Ascending aorta (tissue), 2 donors: ENCODE measurements at regions of chr15 and their contacts with region 1.

Region 1: GRCh38 chr15:90886041-90886614 is 1.8 kb downstream of the FES start:
- DNase-seq: peak in 1 of 2 donors; percentile 85
- H3K4me3 ChIP-seq: peak overlapping the region; percentile 8 to 75
- H3K27ac ChIP-seq: peak overlapping the region; percentile 90 to 94
- H3K4me1 ChIP-seq: peaks cover 10 to 30% of the 10 kb centered on the region in 2 donors
- H3K27me3 ChIP-seq: no peaks in the 10 kb centered on the region
- CTCF ChIP-seq: peak; percentile 96 to 99 (median 98)

Region 2: GRCh38 chr15:89893696-89894455 is 992.3 kb before region 1 on chr15 and contains the start of gene AP3S2:
- intact Hi-C with region 1: loop called (anchors 10 kb)
- DNase-seq: peak; percentile 64 to 95
- H3K4me3 ChIP-seq: peak within 1 kb of the TSS; percentile 76 to 87
- H3K27ac ChIP-seq: peak within 1 kb of the TSS; percentile 85 to 90
- H3K4me1 ChIP-seq: peaks cover 0 to 6% of the 10 kb centered on the region in 2 donors
- H3K27me3 ChIP-seq: no peaks in the 10 kb centered on the region
- CTCF ChIP-seq: no peak
- total RNA-seq, gene AP3S2: 16.0 TPM

Region 3: DNA sequence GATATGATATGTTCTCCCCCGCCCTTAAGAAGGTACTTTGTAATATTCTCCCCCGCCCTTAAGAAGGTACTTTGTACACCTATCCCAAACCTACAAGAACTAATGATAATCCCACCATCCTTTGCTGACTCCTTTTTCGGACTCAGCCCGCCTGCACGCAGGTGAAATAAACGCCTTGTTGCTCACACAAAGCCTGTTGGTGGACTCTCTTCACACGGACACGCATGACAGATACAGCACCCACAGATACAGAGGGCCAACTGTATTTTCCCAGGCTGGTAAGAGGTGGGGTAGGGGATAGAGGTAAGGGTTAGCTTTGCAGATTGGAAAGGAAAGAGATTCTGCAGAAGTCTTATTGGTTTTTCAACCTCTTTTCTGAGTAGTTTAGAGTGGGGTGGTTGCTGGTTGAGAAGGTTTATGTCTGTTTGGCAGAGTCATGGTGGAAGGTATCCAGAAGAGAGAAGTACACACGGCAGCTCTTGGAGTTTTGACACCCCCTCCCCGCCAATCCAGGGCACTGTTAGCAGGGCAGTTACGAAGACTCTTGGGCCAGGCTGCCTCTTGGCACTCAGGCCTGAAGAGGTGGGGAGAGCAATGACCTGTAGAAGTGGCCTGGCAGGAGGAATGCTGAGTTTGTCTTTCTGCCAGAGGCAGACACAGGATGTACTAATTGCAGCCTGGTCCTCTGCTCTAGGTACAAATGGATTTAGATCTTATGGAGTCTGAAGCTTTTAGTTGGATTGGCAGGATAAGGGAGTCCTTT is 747.9 kb before region 1 on chr15:
- intact Hi-C with region 1: no loop called
- DNase-seq: no peak
- H3K4me3 ChIP-seq: no peak overlapping the region
- H3K27ac ChIP-seq: no peak overlapping the region
- H3K4me1 ChIP-seq: no peaks in the 10 kb centered on the region
- H3K27me3 ChIP-seq: no peaks in the 10 kb centered on the region
- CTCF ChIP-seq: no peak

Region 4: GRCh38 chr15:90529371-90530249 is 356.5 kb before region 1 on chr15 and contains the start of gene CRTC3:
- intact Hi-C with region 1: loop called (anchors 10 kb)
- DNase-seq: peak in 1 of 2 donors; percentile 75
- H3K4me3 ChIP-seq: peak within 1 kb of the TSS; percentile 86 to 90
- H3K27ac ChIP-seq: peak within 1 kb of the TSS; percentile 88 to 95
- H3K4me1 ChIP-seq: peaks cover 6 to 20% of the 10 kb centered on the region in 2 donors
- H3K27me3 ChIP-seq: no peaks in the 10 kb centered on the region
- CTCF ChIP-seq: no peak
- total RNA-seq, gene CRTC3: 35.5 TPM

Region 5: GRCh38 chr15:90697181-90697580 is 188.9 kb before region 1 on chr15:
- intact Hi-C with region 1: loop called (anchors 5 kb)
- DNase-seq: peak in 1 of 2 donors; percentile 15
- H3K4me3 ChIP-seq: no peak overlapping the region
- H3K27ac ChIP-seq: no peak overlapping the region
- H3K4me1 ChIP-seq: no peaks in the 10 kb centered on the region
- H3K27me3 ChIP-seq: no peaks in the 10 kb centered on the region
- CTCF ChIP-seq: no peak

Region 6: GRCh38 chr15:90931737-90932659 is 45.9 kb after region 1 on chr15 and contains the start of gene HDDC3:
- intact Hi-C with region 1: loop called (anchors 5 kb)
- DNase-seq: peak; percentile 54 to 95
- H3K4me3 ChIP-seq: peak within 1 kb of the TSS; percentile 72 to 80
- H3K27ac ChIP-seq: peak within 1 kb of the TSS; percentile 84 to 88
- H3K4me1 ChIP-seq: peaks cover 12 to 33% of the 10 kb centered on the region in 2 donors
- H3K27me3 ChIP-seq: no peaks in the 10 kb centered on the region
- CTCF ChIP-seq: peak; percentile 88 to 91 (median 89)
- total RNA-seq, gene HDDC3: 29.4 TPM